ENCODE measurements at regions of chr15 and their contacts with region 1.

Region 1: GRCh38 chr15:29668120-29668602 is 154.1 kb downstream of the TJP1 start:
- DNase-seq: peak; percentile 88
- ATAC-seq: peak; percentile 88
- H3K4me3 ChIP-seq: no peak overlapping the region
- H3K27ac ChIP-seq: no peak overlapping the region
- H3K4me1 ChIP-seq: peaks cover 14% of the 10 kb centered on the region
- H3K27me3 ChIP-seq: peaks cover 10% of the 10 kb centered on the region
- CTCF ChIP-seq: peak; percentile 97
- POLR2A ChIP-seq: 0 out of 2 replicates have a peak, but pooled peaks have one; percentile 54
- RAD21 ChIP-seq: peak; percentile 96

Region 2: DNA sequence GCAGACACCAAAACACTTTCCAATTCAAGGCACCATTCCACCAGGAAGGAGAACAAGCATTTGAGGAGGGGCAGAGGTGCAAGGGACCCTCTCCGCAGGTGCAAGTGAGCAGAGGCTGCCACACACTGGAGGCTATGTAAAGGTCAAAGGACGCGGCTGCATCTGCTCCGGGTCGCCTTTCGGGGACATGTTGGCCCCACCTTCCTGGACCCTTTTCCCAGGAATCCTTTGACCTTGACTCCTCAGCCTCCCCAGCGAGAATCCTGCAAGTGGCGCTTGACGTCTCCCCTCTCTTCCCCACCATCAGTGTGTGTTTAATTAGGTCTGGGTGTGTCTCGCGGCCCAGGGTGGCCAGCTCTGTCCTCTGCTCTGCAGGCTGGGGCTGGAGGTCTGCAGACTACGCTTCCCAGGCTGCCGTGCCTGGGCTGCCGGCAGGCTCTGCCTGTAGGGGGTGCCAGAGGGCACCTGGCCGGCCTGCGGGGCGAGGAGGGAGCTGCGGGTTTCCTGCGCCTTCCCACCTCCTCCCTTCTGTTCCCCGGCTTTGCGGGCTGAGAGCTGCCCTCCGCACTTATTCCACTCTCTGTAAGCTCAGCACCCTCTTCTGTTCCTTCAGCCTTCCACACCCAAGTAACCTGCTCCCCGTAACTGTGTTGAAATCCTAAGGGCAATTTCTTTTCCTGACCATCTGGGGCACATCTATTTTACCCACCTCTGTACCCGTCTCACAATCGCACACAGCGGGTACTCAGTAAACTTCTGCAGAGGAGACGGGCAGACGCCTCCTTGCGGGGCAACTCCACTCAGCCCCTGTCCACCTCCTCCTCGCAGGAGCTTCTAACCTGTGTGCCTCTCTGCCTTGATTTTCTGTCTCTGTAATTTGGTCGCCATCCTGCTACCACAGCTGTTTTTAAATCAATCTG is 528.4 kb before region 1 on chr15:
- CTCF ChIA-PET with region 1: no interaction called
- POLR2A ChIA-PET with region 1: no interaction called
- dilution Hi-C with region 1: no loop called
- in situ Hi-C with region 1: no loop called
- intact Hi-C with region 1: loop called (anchors 10 kb)
- DNase-seq: peak; percentile 24
- ATAC-seq: peak; percentile 88
- H3K4me3 ChIP-seq: no peak overlapping the region
- H3K27ac ChIP-seq: no peak overlapping the region
- H3K4me1 ChIP-seq: no peaks in the 10 kb centered on the region
- H3K27me3 ChIP-seq: peaks cover 13% of the 10 kb centered on the region; the same call in 1 of the 2 replicates
- CTCF ChIP-seq: peak; percentile 73
- POLR2A ChIP-seq: no peak
- RAD21 ChIP-seq: peak; percentile 71

Region 3: DNA sequence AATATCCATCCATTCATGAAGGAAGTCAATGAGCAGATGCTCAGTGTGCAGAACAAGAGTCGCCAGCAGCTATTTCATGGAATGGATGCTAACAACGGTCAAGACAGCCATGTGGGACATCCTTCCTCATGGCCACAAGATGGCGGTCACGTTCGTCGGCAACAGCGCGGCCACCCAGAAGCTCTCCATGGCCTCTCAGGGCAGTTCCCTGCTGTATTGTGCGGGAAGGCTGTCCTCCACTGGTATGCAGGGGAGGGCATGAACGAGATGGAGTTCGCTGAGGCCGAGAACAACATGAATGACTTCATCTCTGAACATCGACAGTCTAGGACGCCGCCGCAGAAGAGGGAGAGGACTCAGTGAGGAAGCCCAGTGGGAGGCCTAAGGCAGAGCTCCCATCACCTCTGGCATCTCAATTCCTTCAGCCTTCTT is 54.2 kb before region 1 on chr15:
- CTCF ChIA-PET with region 1: no interaction called
- POLR2A ChIA-PET with region 1: no interaction called
- dilution Hi-C with region 1: no loop called
- in situ Hi-C with region 1: no loop called
- intact Hi-C with region 1: loop called (anchors 5 kb)
- DNase-seq: no peak
- ATAC-seq: no peak
- H3K4me3 ChIP-seq: no peak overlapping the region
- H3K27ac ChIP-seq: no peak overlapping the region
- H3K4me1 ChIP-seq: peaks cover 9% of the 10 kb centered on the region; the same call in 1 of the 2 replicates
- H3K27me3 ChIP-seq: no peaks in the 10 kb centered on the region
- CTCF ChIP-seq: no peak
- POLR2A ChIP-seq: no peak
- RAD21 ChIP-seq: no peak

Region 4: GRCh38 chr15:29935276-29936020 is 267.3 kb after region 1 on chr15:
- CTCF ChIA-PET with region 1: no interaction called
- POLR2A ChIA-PET with region 1: no interaction called
- dilution Hi-C with region 1: no loop called
- in situ Hi-C with region 1: loop called (anchors 10 kb)
- intact Hi-C with region 1: loop called (anchors 5 kb)
- DNase-seq: no peak
- ATAC-seq: no peak
- H3K4me3 ChIP-seq: no peak overlapping the region
- H3K27ac ChIP-seq: no peak overlapping the region
- H3K4me1 ChIP-seq: peaks cover 16% of the 10 kb centered on the region
- H3K27me3 ChIP-seq: no peaks in the 10 kb centered on the region
- CTCF ChIP-seq: 0 out of 2 replicates have a peak, but pooled peaks have one; percentile 15
- POLR2A ChIP-seq: no peak
- RAD21 ChIP-seq: peak; percentile 25; the same call in 1 of the 2 replicates

Region 5: DNA sequence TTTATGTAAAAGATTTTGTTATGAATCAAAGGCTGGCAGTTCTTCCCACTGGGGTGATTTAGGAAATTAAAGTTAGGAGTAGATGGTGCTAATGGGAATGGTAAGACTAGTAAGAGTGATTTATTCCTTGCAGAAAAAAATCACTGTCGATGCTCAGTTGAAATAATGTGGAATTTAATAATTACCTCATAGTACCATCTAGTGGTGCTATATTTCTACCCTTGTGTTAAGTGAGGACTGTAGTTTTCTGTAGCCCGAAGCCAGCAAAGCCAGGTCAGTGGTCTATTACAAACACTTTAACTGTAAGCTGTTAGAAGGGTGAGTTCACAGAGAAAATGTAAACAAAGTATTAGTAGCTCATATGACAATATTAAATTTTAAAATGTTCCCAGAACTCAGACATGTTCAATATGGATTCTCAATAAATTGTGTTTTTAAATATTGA is 375.1 kb after region 1 on chr15:
- CTCF ChIA-PET with region 1: no interaction called
- POLR2A ChIA-PET with region 1: no interaction called
- dilution Hi-C with region 1: no loop called
- in situ Hi-C with region 1: no loop called
- intact Hi-C with region 1: loop called (anchors 1 kb)
- DNase-seq: peak; percentile 29
- ATAC-seq: peak; percentile 83
- H3K4me3 ChIP-seq: no peak overlapping the region
- H3K27ac ChIP-seq: no peak overlapping the region
- H3K4me1 ChIP-seq: no peaks in the 10 kb centered on the region
- H3K27me3 ChIP-seq: peaks cover 7% of the 10 kb centered on the region
- CTCF ChIP-seq: peak; percentile 50
- POLR2A ChIP-seq: no peak
- RAD21 ChIP-seq: peak; percentile 44

Region 6: GRCh38 chr15:30065025-30065801 is 397.1 kb after region 1 on chr15:
- CTCF ChIA-PET with region 1: no interaction called
- POLR2A ChIA-PET with region 1: no interaction called
- dilution Hi-C with region 1: no loop called
- in situ Hi-C with region 1: loop called (anchors 25 kb)
- intact Hi-C with region 1: no loop called
- DNase-seq: peak; percentile 18
- ATAC-seq: peak; percentile 53
- H3K4me3 ChIP-seq: no peak overlapping the region
- H3K27ac ChIP-seq: no peak overlapping the region
- H3K4me1 ChIP-seq: peaks cover 1% of the 10 kb centered on the region; the same call in 1 of the 2 replicates
- H3K27me3 ChIP-seq: peaks cover 3% of the 10 kb centered on the region
- CTCF ChIP-seq: no peak
- POLR2A ChIP-seq: no peak
- RAD21 ChIP-seq: no peak

Region 7: DNA sequence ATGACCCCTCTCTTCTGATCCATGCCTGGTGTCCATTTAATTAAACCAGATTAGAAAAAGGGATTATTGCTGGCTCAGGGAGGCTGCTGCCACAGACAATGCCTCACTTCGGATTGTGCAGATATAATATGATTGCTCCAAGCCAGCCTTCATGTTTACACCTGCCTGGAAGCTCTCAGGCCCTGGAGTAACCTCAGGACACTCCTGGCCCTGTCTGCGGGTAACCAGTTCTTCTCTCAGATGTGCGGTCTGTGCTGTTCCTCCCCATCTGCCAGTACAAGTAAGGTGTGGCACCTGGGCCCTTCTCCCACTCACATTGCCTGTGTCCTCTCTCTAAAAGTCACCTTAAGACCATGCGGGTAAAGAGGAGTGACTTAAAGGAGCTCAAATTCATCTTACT is 405.8 kb after region 1 on chr15:
- CTCF ChIA-PET with region 1: interaction called, 4 read pairs
- POLR2A ChIA-PET with region 1: no interaction called
- dilution Hi-C with region 1: no loop called
- in situ Hi-C with region 1: loop called (anchors 25 kb)
- intact Hi-C with region 1: loop called (anchors 1 kb)
- DNase-seq: no peak
- ATAC-seq: no peak
- H3K4me3 ChIP-seq: no peak overlapping the region
- H3K27ac ChIP-seq: no peak overlapping the region
- H3K4me1 ChIP-seq: no peaks in the 10 kb centered on the region
- H3K27me3 ChIP-seq: peaks cover 8% of the 10 kb centered on the region
- CTCF ChIP-seq: no peak
- POLR2A ChIP-seq: no peak
- RAD21 ChIP-seq: no peak

Measured in IMR-90 (cell line).